Endothelial cell of umbilical vein (primary cell): ENCODE measurements at regions of chr1 and their contacts with region 1.

Region 1: DNA sequence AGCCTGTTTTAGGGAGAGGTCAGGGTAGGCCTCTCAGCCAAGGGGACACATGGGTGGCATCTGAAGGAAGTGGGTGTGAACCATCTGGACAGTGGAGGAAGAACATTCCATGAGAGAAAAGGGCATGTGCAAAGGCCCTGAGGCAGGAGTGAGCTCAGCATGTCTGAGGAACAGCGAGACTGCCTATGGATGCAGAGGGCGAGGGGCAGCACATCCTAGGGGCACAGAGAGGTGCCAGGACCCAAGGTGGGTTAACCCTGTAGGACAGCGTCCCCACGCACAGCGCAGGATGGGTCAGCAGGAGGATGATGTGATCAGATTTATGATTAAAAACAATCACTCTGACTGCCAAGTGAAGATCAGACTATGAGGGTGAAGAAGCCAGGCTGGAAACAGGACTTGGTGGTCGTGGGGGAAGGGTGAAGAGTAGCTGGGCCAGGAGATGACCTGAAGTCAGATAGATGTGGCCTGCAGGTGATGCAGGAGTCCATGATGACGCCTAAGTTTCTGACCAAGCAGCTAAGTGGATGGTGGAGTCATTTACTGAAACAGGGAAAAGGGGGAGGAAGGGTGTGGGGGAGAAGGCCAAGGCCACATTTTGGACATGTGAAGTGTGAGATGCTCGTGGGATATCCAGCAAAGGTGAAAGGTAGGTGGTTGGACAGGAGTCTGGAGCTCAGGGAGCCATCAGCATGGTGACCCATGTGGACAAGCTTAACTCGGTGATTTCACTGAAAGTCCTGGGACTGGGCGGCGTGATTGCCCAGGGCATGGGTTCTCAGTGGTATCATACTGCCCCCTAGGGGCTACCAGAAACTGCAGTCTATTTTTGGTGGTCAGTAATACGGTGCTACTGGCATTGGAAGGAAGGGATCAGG is 37.8 kb downstream of the PABPC4 start:
- DNase-seq: peak; percentile 75
- H3K4me3 ChIP-seq: no peak overlapping the region
- H3K27ac ChIP-seq: no peak overlapping the region
- H3K4me1 ChIP-seq: no peaks in the 10 kb centered on the region
- H3K27me3 ChIP-seq: no peaks in the 10 kb centered on the region
- CTCF ChIP-seq: peak; percentile 85 to 87
- POLR2A ChIP-seq: no peak

Region 2: DNA sequence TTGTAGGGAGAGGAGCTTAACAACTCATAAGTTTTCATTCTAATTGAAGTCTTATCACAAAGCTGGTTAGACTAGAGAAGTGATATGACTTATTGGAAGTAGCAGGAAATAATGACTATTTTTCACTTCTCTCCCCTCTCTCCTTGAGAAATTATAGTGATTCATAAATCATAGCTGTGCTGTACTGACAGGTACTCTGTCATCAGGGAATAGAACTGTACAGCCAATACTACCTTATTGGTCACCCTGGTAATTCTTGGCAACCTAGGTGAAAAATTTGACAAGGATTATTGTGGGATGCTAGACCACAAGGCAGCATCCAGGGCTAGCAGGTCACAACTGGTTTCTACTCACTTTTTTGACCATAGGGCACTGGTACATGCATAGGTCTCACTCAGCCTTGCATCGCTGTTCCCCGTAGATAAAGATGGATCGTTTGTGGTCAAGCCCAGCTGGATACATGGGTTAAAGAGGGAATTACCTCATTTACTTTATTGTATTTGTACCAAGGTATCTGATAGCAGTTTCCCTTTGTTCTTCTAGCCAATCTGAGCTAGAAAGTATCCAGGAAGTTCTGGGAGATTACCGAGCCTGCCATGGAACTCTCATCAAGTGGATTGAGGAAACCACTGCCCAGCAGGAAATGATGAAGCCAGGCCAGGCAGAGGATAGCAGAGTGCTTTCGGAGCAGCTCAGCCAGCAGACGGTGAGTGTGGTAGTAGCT is 220.8 kb before region 1 on chr1:
- CTCF ChIA-PET with region 1: interaction called, 11 read pairs
- POLR2A ChIA-PET with region 1: no interaction called
- dilution Hi-C with region 1: no loop called
- intact Hi-C with region 1: no loop called
- DNase-seq: peak; percentile 91
- H3K4me3 ChIP-seq: peak overlapping the region in 2 of 3 experiments; percentile 3 to 33
- H3K27ac ChIP-seq: peak overlapping the region; percentile 71
- H3K4me1 ChIP-seq: peaks cover 24% of the 10 kb centered on the region
- H3K27me3 ChIP-seq: no peaks in the 10 kb centered on the region
- CTCF ChIP-seq: no peak
- POLR2A ChIP-seq: peak; percentile 31

Region 3: GRCh38 chr1:39472826-39473225 is 66.0 kb before region 1 on chr1:
- CTCF ChIA-PET with region 1: interaction called, 11 read pairs
- POLR2A ChIA-PET with region 1: no interaction called
- dilution Hi-C with region 1: no loop called
- intact Hi-C with region 1: no loop called
- DNase-seq: no peak
- H3K4me3 ChIP-seq: no peak overlapping the region
- H3K27ac ChIP-seq: no peak overlapping the region
- H3K4me1 ChIP-seq: peaks cover 4% of the 10 kb centered on the region
- H3K27me3 ChIP-seq: no peaks in the 10 kb centered on the region
- CTCF ChIP-seq: no peak
- POLR2A ChIP-seq: no peak

Region 4: DNA sequence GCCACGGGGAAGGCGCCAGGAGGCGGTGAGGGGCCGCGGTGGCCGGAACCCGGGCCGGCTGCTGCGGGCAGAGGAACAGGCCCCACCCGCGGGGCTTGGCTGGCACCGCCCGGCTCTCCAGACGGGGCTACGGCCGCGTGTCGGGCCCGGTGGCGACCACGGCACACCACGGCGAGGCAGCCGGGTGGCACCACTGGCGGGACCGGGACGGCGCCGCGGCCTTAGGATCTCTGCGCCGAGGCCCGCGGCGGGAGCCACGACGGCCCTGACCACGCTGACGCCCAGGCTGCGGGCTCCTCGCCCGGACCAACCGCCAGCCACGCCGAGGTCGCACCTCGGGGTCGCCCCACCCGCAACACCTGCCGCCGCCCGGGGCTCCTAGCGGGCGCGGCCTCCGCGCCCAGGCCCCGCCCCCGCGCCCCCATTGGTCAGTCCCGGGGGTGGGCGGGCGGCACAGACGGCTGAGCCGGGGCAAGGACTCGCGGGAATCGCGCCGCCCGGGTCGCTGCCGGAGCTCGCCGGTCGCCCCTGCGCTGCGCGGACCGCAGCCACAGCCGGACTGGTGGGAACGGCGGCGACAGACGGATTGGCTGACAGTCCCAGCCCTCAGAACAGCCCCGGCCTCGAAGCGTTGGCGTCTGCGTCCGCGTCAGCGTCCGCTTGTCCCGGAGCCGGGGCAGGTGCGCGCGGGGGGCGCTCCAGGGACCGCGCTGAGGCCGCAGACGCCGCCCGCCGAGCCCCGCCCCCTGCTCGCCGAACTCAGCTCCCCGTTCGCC is 47.5 kb before region 1 on chr1 and contains the start of gene BMP8A:
- CTCF ChIA-PET with region 1: interaction called, 22 read pairs
- POLR2A ChIA-PET with region 1: no interaction called
- dilution Hi-C with region 1: no loop called
- intact Hi-C with region 1: loop called (anchors 2 kb)
- DNase-seq: peak; percentile 65
- H3K4me3 ChIP-seq: peak within 1 kb of the TSS in 2 of 3 experiments; percentile 17 to 50
- H3K27ac ChIP-seq: no peak within 1 kb of the TSS
- H3K4me1 ChIP-seq: peaks cover 6% of the 10 kb centered on the region
- H3K27me3 ChIP-seq: peaks cover 7 to 12% of the 10 kb centered on the region in 2 experiments
- CTCF ChIP-seq: no peak
- POLR2A ChIP-seq: peak; percentile 19
- total RNA-seq, gene BMP8A: 0.44 TPM in 1 of 2 replicates, not detected in the other

Region 5: DNA sequence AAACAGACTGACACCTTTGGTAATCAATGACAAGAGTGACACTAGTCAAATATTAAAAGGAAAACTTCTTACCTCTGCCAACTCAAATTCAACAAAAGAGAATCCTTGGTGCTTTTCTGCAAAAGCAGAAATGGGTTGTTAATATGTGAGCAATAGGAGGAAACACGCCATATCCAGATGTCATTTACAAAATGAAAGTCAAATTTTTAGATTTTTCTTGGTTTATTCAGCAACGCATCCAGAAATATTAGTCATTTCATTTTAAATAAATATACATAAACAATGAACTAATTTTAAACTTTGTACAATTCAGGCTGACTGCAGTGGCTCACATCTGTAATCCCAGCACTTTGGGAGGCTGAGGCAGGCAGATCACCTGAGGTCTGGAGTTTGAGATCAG is 15.4 kb after region 1 on chr1:
- CTCF ChIA-PET with region 1: interaction called, 13 read pairs
- POLR2A ChIA-PET with region 1: no interaction called
- dilution Hi-C with region 1: no loop called
- intact Hi-C with region 1: no loop called
- DNase-seq: no peak
- H3K4me3 ChIP-seq: no peak overlapping the region
- H3K27ac ChIP-seq: no peak overlapping the region
- H3K4me1 ChIP-seq: no peaks in the 10 kb centered on the region
- H3K27me3 ChIP-seq: no peaks in the 10 kb centered on the region
- CTCF ChIP-seq: no peak
- POLR2A ChIP-seq: no peak